ENCODE measurements at regions of chr4 and their contacts with region 1.

Region 1: GRCh38 chr4:69881173-69881773 is 21.3 kb upstream of the SULT1E1 start:
- DNase-seq: peak; percentile 14 to 63 (median 40)
- H3K4me3 ChIP-seq: no peak overlapping the region
- H3K27ac ChIP-seq: no peak overlapping the region
- H3K4me1 ChIP-seq: no peaks in the 10 kb centered on the region
- H3K27me3 ChIP-seq: no peaks in the 10 kb centered on the region
- CTCF ChIP-seq: peak; percentile 71 to 92 (median 86)
- POLR2A ChIP-seq: no peak

Region 2: GRCh38 chr4:69689599-69689998 is 191.7 kb before region 1 on chr4:
- intact Hi-C with region 1: loop called (anchors 5 kb)
- DNase-seq: peak in 1 of 7 donors; percentile 4
- H3K4me3 ChIP-seq: no peak overlapping the region
- H3K27ac ChIP-seq: no peak overlapping the region
- H3K4me1 ChIP-seq: peaks cover 0 to 3% of the 10 kb centered on the region in 2 donors
- H3K27me3 ChIP-seq: no peaks in the 10 kb centered on the region
- CTCF ChIP-seq: peak; percentile 42 to 78 (median 64)
- POLR2A ChIP-seq: no peak

Measured in adrenal gland (tissue), 19 donors.